ENCODE measurements at regions of chr1 and their contacts with region 1.

Region 1: GRCh38 chr1:50332941-50333594 is 90.2 kb downstream of the DMRTA2 start:
- DNase-seq: peak; percentile 25 to 86 (median 59)
- ATAC-seq: peak; percentile 75 to 98 (median 92)
- H3K4me3 ChIP-seq: peak overlapping the region; percentile 26 to 58 (median 50)
- H3K27ac ChIP-seq: peak overlapping the region in 2 of 12 donors; percentile 33 to 34
- H3K4me1 ChIP-seq: peaks cover 0 to 15% (median 9%) of the 10 kb centered on the region in 12 donors
- H3K27me3 ChIP-seq: peaks cover 0 to 51% (median 9%) of the 10 kb centered on the region in 9 donors
- CTCF ChIP-seq: peak; percentile 72 to 89 (median 78)
- POLR2A ChIP-seq: no peak

Region 2: GRCh38 chr1:48916130-48917069 is 1416.7 kb before region 1 on chr1:
- intact Hi-C with region 1: loop called in 1 of 10 experiments (anchors 5 kb)
- DNase-seq: no peak
- ATAC-seq: peak in 1 of 4 donors; percentile 36
- H3K4me3 ChIP-seq: no peak overlapping the region
- H3K27ac ChIP-seq: no peak overlapping the region
- H3K4me1 ChIP-seq: peaks cover 0 to 6% (median 0%) of the 10 kb centered on the region in 12 donors
- H3K27me3 ChIP-seq: peaks cover 0 to 12% (median 0%) of the 10 kb centered on the region in 9 donors
- CTCF ChIP-seq: peak in 8 of 12 donors; percentile 11 to 43 (median 32)
- POLR2A ChIP-seq: no peak